Naive thymus-derived CD4-positive, alpha-beta T cell (primary cell): ENCODE measurements at regions of chr10 and their contacts with region 1.

Region 1: DNA sequence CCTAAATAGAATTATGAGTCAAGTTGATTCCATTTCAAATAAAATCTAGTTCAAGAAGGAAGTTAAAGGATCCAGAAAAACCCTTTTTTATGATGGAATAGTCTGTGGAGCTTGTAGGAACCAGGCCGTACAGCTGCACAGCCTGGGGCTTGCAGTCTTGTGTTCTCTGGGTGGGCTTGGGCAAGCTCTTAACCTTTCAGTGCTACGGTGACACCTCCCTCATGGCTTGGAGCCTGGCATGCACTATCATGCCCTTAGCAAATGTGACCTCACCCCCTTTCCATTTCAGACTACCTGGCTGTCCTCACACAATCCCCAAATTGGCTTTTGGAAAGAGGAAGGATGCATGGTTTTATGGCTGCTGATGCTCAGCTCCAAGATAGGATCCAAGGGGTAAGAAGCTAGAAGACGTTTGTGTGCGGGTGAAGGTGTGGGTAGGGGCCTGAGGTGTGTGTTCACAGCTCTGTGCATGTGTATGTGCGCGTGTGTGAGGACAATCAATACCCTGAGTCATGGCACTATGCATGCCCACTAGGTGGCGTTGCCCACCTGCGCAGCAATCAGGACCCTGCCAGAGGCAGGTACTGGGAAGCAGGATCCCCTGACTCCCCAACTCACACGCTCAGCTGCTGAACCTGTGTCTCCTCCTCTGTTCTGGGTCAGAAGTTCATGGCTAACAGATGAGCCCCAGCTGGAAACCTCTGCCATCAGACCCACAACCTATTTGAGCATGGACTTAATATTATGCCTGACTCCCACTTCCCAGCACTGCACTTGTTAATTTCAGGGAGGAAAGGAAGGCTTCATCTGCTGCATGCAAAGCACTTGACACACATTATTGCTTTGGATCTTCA is 113.4 kb downstream of the PTPN20 start:
- DNase-seq: peak; percentile 43 to 73 (median 60)
- ATAC-seq: peak; percentile 76
- H3K4me3 ChIP-seq: no peak overlapping the region
- H3K4me3 Mint-ChIP-seq: no peak overlapping the region
- H3K27ac ChIP-seq: no peak overlapping the region
- H3K27ac Mint-ChIP-seq: peak overlapping the region in 1 of 9 donors; percentile 53
- H3K4me1 ChIP-seq: no peaks in the 10 kb centered on the region
- H3K4me1 Mint-ChIP-seq: peaks cover 0 to 7% (median 5%) of the 10 kb centered on the region in 7 donors
- H3K27me3 ChIP-seq: no peaks in the 10 kb centered on the region
- H3K27me3 Mint-ChIP-seq: peaks cover 0 to 7% (median 4%) of the 10 kb centered on the region in 5 donors

Region 2: GRCh38 chr10:47165711-47166524 is 141.3 kb after region 1 on chr10:
- CTCF ChIA-PET with region 1: interaction called, 4 read pairs
- POLR2A ChIA-PET with region 1: interaction called, 3 read pairs
- intact Hi-C with region 1: loop called in 1 of 2 experiments (anchors 5 kb)
- DNase-seq: peak; percentile 41 to 80 (median 68)
- ATAC-seq: peak; percentile 82
- H3K4me3 ChIP-seq: peak overlapping the region; percentile 71
- H3K4me3 Mint-ChIP-seq: peak overlapping the region; percentile 79 to 93 (median 92)
- H3K27ac ChIP-seq: peak overlapping the region; percentile 77
- H3K27ac Mint-ChIP-seq: peak overlapping the region; percentile 84 to 100 (median 99)
- H3K4me1 ChIP-seq: peaks cover 12 to 23% of the 10 kb centered on the region in 2 donors
- H3K4me1 Mint-ChIP-seq: peaks cover 19 to 43% (median 28%) of the 10 kb centered on the region in 7 donors
- H3K27me3 ChIP-seq: no peaks in the 10 kb centered on the region
- H3K27me3 Mint-ChIP-seq: peaks cover 0 to 9% (median 0%) of the 10 kb centered on the region in 5 donors

Region 3: DNA sequence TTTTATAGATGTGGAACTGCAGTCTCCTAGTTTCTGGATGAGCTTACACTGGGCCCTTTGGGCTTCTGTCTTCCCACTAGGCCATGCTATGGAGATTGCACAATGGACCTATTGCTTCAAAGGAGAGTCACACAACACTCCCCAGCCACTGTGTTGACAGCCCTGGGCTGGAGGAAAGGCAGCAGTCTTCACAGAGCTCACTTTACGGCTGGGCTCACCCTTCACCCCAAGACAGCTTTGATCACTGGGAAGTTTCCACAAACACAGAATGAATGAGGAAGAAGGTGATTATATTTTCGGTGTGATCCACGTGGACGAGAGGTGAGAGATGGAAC is 182.6 kb after region 1 on chr10:
- CTCF ChIA-PET with region 1: no interaction called
- POLR2A ChIA-PET with region 1: no interaction called
- intact Hi-C with region 1: loop called in 1 of 2 experiments (anchors 5 kb)
- DNase-seq: peak in 7 of 9 donors; percentile 18 to 38 (median 25)
- ATAC-seq: peak; percentile 66
- H3K4me3 ChIP-seq: peak overlapping the region; percentile 28
- H3K4me3 Mint-ChIP-seq: peak overlapping the region; percentile 63 to 84 (median 74)
- H3K27ac ChIP-seq: peak overlapping the region; percentile 47
- H3K27ac Mint-ChIP-seq: peak overlapping the region; percentile 70 to 99 (median 96)
- H3K4me1 ChIP-seq: peaks cover 25 to 55% of the 10 kb centered on the region in 2 donors
- H3K4me1 Mint-ChIP-seq: peaks cover 23 to 79% (median 70%) of the 10 kb centered on the region in 7 donors
- H3K27me3 ChIP-seq: no peaks in the 10 kb centered on the region
- H3K27me3 Mint-ChIP-seq: no peaks in the 10 kb centered on the region

Region 4: DNA sequence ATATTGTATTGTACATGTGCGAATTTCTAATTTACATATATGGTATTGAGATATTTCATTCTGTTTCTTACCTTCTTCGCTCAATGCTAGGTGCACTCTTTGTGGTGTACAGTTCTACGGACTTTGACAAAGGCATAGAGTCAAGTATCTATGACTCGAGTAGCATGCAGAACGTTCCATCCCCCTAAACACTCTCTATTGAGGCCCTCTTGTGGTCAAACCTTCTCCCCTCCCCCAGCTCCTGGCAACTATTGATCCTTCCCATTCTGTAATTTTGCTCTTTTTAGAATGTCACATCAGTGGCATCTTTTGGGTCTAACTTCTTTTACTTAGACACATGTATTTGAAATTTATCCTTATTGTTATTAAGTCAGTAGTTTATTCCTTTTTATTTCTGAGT is 244.7 kb after region 1 on chr10:
- CTCF ChIA-PET with region 1: interaction called, 3 read pairs
- POLR2A ChIA-PET with region 1: no interaction called
- intact Hi-C with region 1: loop called in 1 of 2 experiments (anchors 1 kb)
- DNase-seq: no peak
- ATAC-seq: no peak
- H3K4me3 ChIP-seq: no peak overlapping the region
- H3K4me3 Mint-ChIP-seq: peak overlapping the region in 1 of 10 donors; percentile 14
- H3K27ac ChIP-seq: no peak overlapping the region
- H3K27ac Mint-ChIP-seq: peak overlapping the region in 4 of 9 donors; percentile 13 to 53 (median 28)
- H3K4me1 ChIP-seq: peaks cover 9 to 18% of the 10 kb centered on the region in 2 donors
- H3K4me1 Mint-ChIP-seq: peaks cover 7 to 48% (median 35%) of the 10 kb centered on the region in 7 donors
- H3K27me3 ChIP-seq: no peaks in the 10 kb centered on the region
- H3K27me3 Mint-ChIP-seq: no peaks in the 10 kb centered on the region

Region 5: DNA sequence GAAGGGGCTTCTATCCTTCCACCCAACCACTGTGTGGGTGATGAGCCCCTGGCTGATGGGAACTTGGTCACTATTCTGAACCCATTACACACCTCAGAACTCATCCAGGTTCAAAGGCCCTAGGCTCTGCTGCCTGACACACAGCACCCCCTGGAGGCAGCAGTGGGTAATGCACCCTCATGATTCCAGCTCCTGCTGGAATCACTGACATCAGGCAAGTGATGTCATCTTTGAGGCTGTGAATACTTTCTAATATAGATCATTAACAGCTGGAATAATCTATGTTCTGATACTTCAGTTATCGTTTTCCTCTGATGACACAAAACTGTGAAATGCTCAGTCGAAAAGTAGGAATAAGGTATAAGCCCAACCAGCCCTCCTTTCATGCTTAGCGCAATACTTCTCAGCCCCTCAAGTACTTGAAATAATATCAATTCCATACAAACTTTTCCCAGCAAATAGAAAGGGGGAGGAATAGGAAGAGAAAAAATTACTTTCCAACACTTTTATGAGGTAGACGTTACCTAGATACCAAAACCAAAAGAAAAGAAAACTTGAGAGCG is 316.1 kb after region 1 on chr10:
- CTCF ChIA-PET with region 1: interaction called, 14 read pairs
- POLR2A ChIA-PET with region 1: no interaction called
- intact Hi-C with region 1: loop called (anchors 1 kb)
- DNase-seq: peak; percentile 45 to 76 (median 64)
- ATAC-seq: peak; percentile 88
- H3K4me3 ChIP-seq: no peak overlapping the region
- H3K4me3 Mint-ChIP-seq: no peak overlapping the region
- H3K27ac ChIP-seq: no peak overlapping the region
- H3K27ac Mint-ChIP-seq: no peak overlapping the region
- H3K4me1 ChIP-seq: no peaks in the 10 kb centered on the region
- H3K4me1 Mint-ChIP-seq: peaks cover 0 to 5% (median 0%) of the 10 kb centered on the region in 7 donors
- H3K27me3 ChIP-seq: no peaks in the 10 kb centered on the region
- H3K27me3 Mint-ChIP-seq: peaks cover 4 to 20% (median 11%) of the 10 kb centered on the region in 5 donors